Activated B cell treated with CpG ODN at 0.5 μM for 24 hours (primary cell): ENCODE measurements at regions of chr6 and their contacts with region 1.

Region 1: DNA sequence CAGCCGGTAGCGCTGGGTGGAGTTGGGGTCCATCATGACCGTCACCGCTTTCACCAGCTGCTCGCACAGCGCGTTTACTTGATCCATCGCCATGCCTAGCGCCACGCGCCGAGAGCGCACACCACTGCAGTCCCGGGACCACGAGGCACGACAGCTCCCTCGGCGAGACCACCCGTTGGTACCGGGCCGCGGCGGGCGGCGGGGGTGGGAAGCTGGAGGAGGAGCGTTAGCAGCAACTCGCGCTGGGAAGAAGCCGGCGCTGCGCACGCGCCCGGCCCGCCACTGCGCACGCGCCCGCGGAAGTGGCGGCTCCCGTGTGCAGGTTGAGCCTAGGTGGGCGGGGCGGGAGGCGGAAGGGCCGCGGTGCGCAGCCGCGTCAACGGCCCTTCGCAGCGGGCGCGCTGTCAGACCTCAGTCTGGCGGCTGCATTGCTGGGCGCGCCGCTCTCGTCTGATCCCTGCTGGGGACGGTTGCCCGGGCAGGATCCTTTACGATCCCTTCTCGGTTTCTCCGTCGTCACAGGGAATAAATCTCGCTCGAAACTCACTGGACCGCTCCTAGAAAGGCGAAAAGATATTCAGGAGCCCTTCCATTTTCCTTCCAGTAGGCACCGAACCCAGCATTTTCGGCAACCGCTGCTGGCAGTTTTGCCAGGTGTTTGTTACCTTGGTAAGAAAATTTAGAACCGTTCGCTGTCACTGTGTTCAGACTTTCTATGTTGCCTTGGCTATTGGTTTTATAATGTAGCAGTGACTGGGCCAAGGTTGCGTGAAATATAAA is at the starts of genes POLH and XPO5:
- DNase-seq: peak; percentile 91
- ATAC-seq: peak; percentile 94
- H3K4me3 Mint-ChIP-seq: peak within 1 kb of the TSS; percentile 97
- H3K27ac Mint-ChIP-seq: peak within 1 kb of the TSS; percentile 86
- H3K4me1 Mint-ChIP-seq: peaks cover 38% of the 10 kb centered on the region
- H3K27me3 Mint-ChIP-seq: no peaks in the 10 kb centered on the region
- CTCF ChIP-seq: no peak
- total RNA-seq, gene POLH: 23.3 and 26.5 TPM in 2 replicates
- total RNA-seq, gene XPO5: 54.4 and 59.4 TPM in 2 replicates

Region 2: GRCh38 chr6:42563697-42564505 is 1012.1 kb before region 1 on chr6 and contains the start of gene UBR2:
- CTCF ChIA-PET with region 1: no interaction called
- POLR2A ChIA-PET with region 1: no interaction called
- intact Hi-C with region 1: loop called (anchors 2 kb)
- DNase-seq: peak; percentile 73
- ATAC-seq: peak; percentile 96
- H3K4me3 Mint-ChIP-seq: peak within 1 kb of the TSS; percentile 92
- H3K27ac Mint-ChIP-seq: peak within 1 kb of the TSS; percentile 92
- H3K4me1 Mint-ChIP-seq: peaks cover 43% of the 10 kb centered on the region
- H3K27me3 Mint-ChIP-seq: no peaks in the 10 kb centered on the region
- CTCF ChIP-seq: no peak
- total RNA-seq, gene UBR2: 34.3 and 40.8 TPM in 2 replicates

Region 3: GRCh38 chr6:43516697-43517504 is 59.1 kb before region 1 on chr6 and contains the starts of genes POLR1C and YIPF3:
- CTCF ChIA-PET with region 1: no interaction called
- POLR2A ChIA-PET with region 1: interaction called, 4 read pairs
- intact Hi-C with region 1: loop called (anchors 1 kb)
- DNase-seq: peak; percentile 87
- ATAC-seq: peak; percentile 94
- H3K4me3 Mint-ChIP-seq: no peak within 1 kb of the TSS
- H3K27ac Mint-ChIP-seq: peak within 1 kb of the TSS; percentile 54
- H3K4me1 Mint-ChIP-seq: peaks cover 29% of the 10 kb centered on the region
- H3K27me3 Mint-ChIP-seq: no peaks in the 10 kb centered on the region
- CTCF ChIP-seq: no peak
- total RNA-seq, gene POLR1C: 67.7 and 75.6 TPM in 2 replicates
- total RNA-seq, gene YIPF3: 51.7 and 59.1 TPM in 2 replicates

Region 4: DNA sequence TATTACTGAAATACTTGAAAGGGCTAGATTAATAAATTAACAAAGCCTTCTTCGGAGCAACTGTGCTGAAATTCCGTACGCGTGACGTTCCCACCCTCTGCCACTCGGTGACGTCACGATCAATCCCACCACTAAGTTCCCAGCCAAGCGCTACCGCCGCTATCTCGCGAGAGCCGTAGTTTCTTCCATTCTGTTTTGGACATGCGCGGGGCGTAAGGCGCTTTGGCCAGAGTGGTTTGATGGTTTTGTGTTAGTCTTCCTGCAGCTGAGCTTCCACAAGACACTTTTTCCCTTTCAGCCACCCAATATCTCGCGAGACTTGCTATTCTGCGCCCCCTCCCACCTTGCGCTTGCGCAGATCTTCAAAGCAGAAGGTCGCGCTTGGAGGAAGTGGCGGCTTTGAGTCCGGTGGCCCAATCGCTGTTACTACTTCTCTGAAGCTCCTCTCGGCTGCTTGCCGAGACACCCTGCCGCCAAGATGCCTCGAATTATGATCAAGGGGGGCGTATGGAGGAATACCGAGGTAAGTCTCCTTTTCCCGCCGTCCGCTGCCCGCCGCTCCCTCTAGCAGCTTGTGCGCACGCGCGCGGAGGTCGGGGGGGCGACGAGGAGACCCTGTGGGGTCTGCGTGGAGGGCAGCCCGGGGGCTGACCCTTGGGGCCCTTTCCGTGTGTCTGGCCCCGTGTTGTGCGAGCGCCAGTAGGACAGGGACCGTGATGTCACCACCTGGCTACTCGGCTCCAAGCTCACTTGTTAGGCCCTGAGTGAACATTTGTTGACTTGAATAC is 811.6 kb after region 1 on chr6 and contains the start of gene CDC5L:
- CTCF ChIA-PET with region 1: no interaction called
- POLR2A ChIA-PET with region 1: no interaction called
- intact Hi-C with region 1: loop called (anchors 10 kb)
- DNase-seq: peak; percentile 82
- ATAC-seq: peak; percentile 91
- H3K4me3 Mint-ChIP-seq: peak within 1 kb of the TSS; percentile 94
- H3K27ac Mint-ChIP-seq: peak within 1 kb of the TSS; percentile 96
- H3K4me1 Mint-ChIP-seq: peaks cover 41% of the 10 kb centered on the region
- H3K27me3 Mint-ChIP-seq: no peaks in the 10 kb centered on the region
- CTCF ChIP-seq: no peak
- total RNA-seq, gene CDC5L: 20.0 and 20.2 TPM in 2 replicates